Activated B cell treated with CpG ODN at 0.5 μM for 24 hours (primary cell): ENCODE measurements at regions of chr1 and their contacts with region 1.

Region 1: GRCh38 chr1:221435504-221435904 is 306.4 kb downstream of the DUSP10 start:
- DNase-seq: no peak
- ATAC-seq: peak; percentile 27
- H3K4me3 Mint-ChIP-seq: no peak overlapping the region
- H3K27ac Mint-ChIP-seq: no peak overlapping the region
- H3K4me1 Mint-ChIP-seq: peaks cover 26% of the 10 kb centered on the region
- H3K27me3 Mint-ChIP-seq: peaks cover 4% of the 10 kb centered on the region
- CTCF ChIP-seq: peak; percentile 29

Region 2: DNA sequence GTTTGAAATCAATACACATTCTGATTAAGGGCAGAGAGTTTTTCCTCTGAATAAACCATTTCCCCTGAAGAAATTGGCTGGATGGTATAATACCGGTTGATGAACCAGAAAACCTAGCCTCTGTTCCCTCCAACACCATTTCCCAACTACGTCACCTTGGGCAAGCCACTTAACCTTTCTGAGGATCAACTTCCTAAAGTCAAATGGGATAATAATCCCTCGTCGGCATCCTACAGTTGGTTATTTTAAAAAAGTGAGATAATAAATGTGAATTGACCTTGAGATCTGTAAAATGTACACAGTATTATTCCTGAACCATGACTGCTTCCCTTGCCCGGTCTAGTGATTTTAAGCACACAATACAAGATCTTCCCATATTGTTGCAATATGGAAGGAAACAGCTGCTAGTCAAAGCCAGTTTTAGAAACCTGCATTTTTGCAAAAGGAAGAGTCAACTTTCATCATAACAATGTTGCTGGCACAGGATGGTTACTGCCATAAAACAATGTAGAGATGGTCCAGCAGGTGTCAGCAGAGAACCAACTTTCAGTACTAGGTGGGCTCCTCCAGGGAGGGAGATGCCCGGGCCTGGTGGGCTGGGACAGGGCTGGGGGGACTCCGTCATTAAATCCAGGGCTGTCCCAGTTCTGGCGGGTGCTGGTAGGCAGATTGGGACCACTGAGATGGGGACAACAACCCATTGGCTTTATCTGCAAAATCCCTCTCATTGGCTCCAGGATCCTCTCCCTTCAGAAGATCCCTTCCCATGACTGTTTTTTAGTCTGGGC is 561.4 kb before region 1 on chr1:
- CTCF ChIA-PET with region 1: interaction called, 52 read pairs
- POLR2A ChIA-PET with region 1: interaction called, 21 read pairs
- intact Hi-C with region 1: loop called (anchors 1 kb)
- DNase-seq: peak; percentile 36
- ATAC-seq: no peak
- H3K4me3 Mint-ChIP-seq: no peak overlapping the region
- H3K27ac Mint-ChIP-seq: no peak overlapping the region
- H3K4me1 Mint-ChIP-seq: peaks cover 30% of the 10 kb centered on the region
- H3K27me3 Mint-ChIP-seq: peaks cover 2% of the 10 kb centered on the region
- CTCF ChIP-seq: no peak

Region 3: DNA sequence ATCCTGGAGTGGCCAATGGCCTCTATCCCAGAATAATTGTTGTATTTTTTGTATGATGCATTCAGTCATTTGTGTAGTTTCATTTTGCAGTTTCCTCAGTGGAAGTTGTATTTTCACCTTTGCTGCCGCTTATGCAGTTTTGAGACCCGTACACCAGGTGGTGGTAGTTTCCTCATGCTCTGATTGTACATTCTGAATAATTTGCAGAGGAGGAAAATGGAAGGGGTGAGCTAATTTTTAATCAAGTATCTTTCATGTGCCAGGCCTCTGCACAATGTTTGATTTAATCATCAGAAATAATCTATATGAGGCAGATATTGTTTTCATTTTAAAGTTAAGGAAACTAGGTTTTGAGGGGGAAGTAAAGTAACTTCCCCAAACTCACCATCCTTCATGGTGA is 526.7 kb before region 1 on chr1:
- CTCF ChIA-PET with region 1: interaction called, 5 read pairs
- POLR2A ChIA-PET with region 1: interaction called, 4 read pairs
- intact Hi-C with region 1: loop called (anchors 1 kb)
- DNase-seq: no peak
- ATAC-seq: peak; percentile 52
- H3K4me3 Mint-ChIP-seq: no peak overlapping the region
- H3K27ac Mint-ChIP-seq: no peak overlapping the region
- H3K4me1 Mint-ChIP-seq: peaks cover 10% of the 10 kb centered on the region
- H3K27me3 Mint-ChIP-seq: peaks cover 9% of the 10 kb centered on the region
- CTCF ChIP-seq: no peak

Region 4: GRCh38 chr1:221069178-221069903 is 366.2 kb before region 1 on chr1:
- CTCF ChIA-PET with region 1: no interaction called
- POLR2A ChIA-PET with region 1: interaction called, 4 read pairs
- intact Hi-C with region 1: loop called (anchors 1 kb)
- DNase-seq: peak; percentile 59
- ATAC-seq: peak; percentile 83
- H3K4me3 Mint-ChIP-seq: peak overlapping the region; percentile 75
- H3K27ac Mint-ChIP-seq: peak overlapping the region; percentile 99
- H3K4me1 Mint-ChIP-seq: peaks cover 85% of the 10 kb centered on the region
- H3K27me3 Mint-ChIP-seq: no peaks in the 10 kb centered on the region
- CTCF ChIP-seq: no peak

Region 5: GRCh38 chr1:221125976-221126375 is 309.5 kb before region 1 on chr1:
- CTCF ChIA-PET with region 1: no interaction called
- POLR2A ChIA-PET with region 1: no interaction called
- intact Hi-C with region 1: no loop called
- DNase-seq: no peak
- ATAC-seq: no peak
- H3K4me3 Mint-ChIP-seq: no peak overlapping the region
- H3K27ac Mint-ChIP-seq: no peak overlapping the region
- H3K4me1 Mint-ChIP-seq: no peaks in the 10 kb centered on the region
- H3K27me3 Mint-ChIP-seq: no peaks in the 10 kb centered on the region
- CTCF ChIP-seq: no peak

Region 6: DNA sequence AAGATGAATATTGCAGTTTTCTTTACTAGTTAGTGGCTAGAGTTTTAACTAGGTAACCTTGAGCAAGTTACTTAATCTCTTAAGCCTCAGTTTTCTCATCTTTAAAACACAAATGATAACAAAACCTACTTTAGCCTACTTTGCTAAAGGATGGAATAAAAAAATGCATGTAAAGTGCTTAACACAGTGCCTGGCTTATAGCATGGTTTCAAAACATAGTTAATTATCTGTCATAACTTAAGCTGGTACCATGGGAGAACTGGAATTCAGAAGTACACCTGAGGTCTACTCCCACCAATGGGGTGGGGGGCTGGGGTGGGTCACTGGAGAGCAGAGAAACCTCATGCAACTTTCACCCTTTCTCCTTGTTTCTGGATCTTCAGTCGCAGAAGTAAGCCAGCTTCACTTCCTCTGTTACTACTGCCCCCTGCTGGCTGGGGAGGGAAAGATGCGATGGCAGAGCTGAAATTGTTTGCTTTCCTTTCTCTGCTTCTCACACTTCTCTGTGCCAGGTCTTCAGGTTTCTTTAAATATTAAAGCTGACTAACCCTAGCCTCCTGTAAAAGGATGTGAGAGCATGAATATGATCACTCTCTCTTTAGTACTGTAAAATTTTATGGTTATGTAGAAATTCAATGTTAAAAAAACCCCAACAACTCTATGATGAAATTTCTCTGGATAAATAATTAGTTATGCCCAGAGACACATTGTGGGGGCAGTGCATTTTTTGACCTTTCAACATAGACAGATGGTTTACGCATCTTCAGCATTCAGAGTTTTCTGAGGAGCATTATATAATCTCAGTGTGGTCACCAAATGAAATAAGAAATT is 232.1 kb before region 1 on chr1:
- CTCF ChIA-PET with region 1: interaction called, 17 read pairs
- POLR2A ChIA-PET with region 1: no interaction called
- intact Hi-C with region 1: loop called (anchors 1 kb)
- DNase-seq: peak; percentile 59
- ATAC-seq: peak; percentile 45
- H3K4me3 Mint-ChIP-seq: no peak overlapping the region
- H3K27ac Mint-ChIP-seq: no peak overlapping the region
- H3K4me1 Mint-ChIP-seq: peaks cover 3% of the 10 kb centered on the region
- H3K27me3 Mint-ChIP-seq: peaks cover 7% of the 10 kb centered on the region
- CTCF ChIP-seq: no peak

Region 7: DNA sequence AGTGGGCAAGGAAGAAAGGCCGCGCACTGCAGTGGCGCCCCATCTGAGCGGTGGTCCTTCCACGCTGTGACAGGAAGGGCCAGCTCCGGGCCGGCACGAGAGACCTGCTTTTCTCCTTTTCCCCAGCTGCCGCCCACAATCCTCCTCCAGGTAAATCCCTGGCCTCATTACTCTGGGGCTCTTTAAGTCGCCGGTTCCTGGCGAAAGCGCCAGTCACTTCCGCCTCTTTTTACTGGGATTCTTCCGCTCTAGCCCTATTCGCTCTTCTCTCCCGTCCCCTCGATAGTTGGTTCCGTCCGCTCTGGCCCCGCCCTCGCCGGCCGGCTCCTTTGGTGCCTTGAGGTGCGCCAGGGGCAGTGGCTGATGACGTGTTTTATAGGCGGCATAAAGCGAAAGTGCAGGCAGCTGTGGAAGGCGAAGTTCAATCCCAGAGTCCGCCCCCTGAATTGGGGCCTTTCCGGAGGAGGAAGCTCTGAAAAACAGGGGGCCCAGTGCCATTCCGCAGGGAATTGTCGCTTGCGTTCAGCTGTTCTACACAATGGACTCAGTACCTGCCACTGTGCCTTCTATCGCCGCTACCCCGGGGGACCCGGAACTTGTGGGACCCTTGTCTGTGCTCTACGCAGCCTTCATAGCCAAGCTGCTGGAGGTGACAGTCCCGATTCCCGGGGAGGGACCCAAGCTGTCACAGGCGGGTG is 1208.6 kb after region 1 on chr1:
- CTCF ChIA-PET with region 1: no interaction called
- POLR2A ChIA-PET with region 1: no interaction called
- intact Hi-C with region 1: loop called (anchors 10 kb)
- DNase-seq: peak; percentile 94
- ATAC-seq: peak; percentile 96
- H3K4me3 Mint-ChIP-seq: peak overlapping the region; percentile 100
- H3K27ac Mint-ChIP-seq: peak overlapping the region; percentile 99
- H3K4me1 Mint-ChIP-seq: peaks cover 25% of the 10 kb centered on the region
- H3K27me3 Mint-ChIP-seq: no peaks in the 10 kb centered on the region
- CTCF ChIP-seq: no peak